ENCODE measurements at regions of chr18 and their contacts with region 1.

Region 1: DNA sequence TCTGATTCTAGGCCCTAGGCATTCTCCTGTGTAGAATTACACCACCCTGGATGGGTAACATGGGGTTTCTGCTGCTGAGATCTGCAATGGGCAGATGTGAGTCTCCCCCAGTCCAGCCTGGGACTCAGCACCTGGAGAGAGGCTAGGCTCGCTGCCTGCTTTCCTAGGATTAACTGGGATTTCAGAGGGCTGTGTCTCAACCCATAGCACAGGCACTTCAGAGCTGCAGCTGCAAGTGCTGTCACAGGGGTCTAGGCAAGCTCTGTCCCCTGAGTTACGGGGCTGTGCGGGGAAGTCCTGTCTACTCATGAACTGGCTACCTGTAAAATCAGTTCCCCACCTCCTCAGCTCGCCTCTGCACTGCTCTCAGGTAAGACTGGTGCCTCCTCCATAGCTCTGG is 51.5 kb downstream of the CABLES1 start:
- DNase-seq: no peak
- H3K4me3 ChIP-seq: no peak overlapping the region
- H3K27ac ChIP-seq: no peak overlapping the region
- H3K4me1 ChIP-seq: no peaks in the 10 kb centered on the region
- H3K27me3 ChIP-seq: no peaks in the 10 kb centered on the region
- CTCF ChIP-seq: no peak

Region 2: DNA sequence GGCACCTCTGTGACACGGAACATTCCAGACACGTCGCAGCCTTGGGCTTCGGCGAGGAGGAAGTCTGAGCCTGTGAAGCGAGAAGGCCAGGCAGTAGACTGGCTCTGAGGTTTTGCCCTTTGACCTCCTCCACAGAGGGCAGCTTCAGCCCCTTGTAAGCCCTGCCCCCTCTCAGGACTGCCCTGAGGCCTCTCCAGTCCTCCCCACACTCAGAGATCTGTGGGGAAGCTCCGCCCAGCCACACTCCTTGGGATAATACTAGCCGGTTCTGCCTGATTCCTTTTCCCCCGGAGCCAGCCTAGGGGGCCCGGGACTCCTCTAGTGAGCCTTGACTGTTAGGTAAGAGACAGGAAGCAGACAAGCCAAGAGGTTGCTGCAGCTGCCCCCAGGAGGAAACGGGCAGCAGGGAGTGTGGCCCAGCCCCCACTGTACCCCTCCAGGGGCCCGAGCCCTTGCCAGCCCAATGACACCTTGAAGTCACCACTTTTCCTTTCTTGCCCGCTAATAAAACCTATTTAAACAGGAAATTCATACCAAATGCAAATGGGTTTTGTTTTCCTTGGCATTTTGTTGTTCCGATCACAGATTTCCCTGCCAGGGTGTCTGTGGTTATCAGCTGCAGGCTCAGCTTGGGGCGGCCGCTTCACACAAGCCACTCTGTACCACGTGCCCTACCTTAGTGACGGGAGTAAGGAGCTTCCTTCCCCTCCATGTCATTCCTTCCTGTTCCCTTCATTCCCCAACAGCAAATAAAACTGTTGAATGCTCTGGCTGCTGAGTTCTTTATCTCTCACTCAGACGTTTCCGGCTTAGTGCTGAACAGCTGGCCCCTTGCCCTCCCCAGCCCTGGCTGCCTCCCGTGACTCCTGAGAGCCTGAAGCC is 73.2 kb after region 1 on chr18:
- CTCF ChIA-PET with region 1: no interaction called
- POLR2A ChIA-PET with region 1: interaction called, 11 read pairs
- intact Hi-C with region 1: no loop called
- DNase-seq: peak; percentile 77 to 89
- H3K4me3 ChIP-seq: peak overlapping the region; percentile 48; the same call in 1 of the 2 replicates
- H3K27ac ChIP-seq: peak overlapping the region; percentile 91
- H3K4me1 ChIP-seq: peaks cover 45% of the 10 kb centered on the region
- H3K27me3 ChIP-seq: no peaks in the 10 kb centered on the region
- CTCF ChIP-seq: no peak

Measured in PC-9 (cell line).